Endothelial cell of umbilical vein (primary cell): ENCODE measurements at regions of chr13 and their contacts with region 1.

Region 1: DNA sequence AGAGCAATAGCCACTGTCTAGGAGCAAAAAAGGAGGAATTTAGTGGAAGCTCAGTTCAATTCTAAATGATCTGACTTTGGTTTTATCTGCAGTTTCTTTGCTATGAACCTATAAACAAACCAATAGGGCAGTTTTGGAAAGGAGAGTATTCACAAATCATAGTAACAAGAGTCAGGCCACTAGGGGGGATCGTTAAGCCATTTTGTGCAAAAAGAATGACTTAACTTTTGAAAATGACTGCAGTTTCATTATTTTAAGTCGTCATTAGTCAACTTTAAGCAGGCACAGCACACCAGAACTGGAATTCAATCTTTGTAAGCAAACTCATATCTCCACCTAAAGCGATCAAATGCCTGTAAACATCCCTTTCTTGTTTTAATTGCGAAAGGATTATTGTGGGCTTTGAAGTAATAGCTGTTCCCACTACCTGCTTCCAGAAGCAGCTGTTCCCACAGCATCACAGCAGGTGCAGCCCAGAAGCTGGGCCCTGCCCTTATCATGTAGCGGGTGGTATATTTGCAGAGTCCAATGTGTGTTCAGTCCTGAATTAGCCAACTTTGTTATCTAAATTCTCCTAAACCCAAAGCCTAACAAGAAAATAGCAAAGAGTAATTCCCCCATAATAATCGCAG is 51.5 kb downstream of the SOX21 start:
- DNase-seq: peak; percentile 36
- H3K4me3 ChIP-seq: no peak overlapping the region
- H3K27ac ChIP-seq: no peak overlapping the region
- H3K4me1 ChIP-seq: peaks cover 25% of the 10 kb centered on the region
- H3K27me3 ChIP-seq: peaks cover 0 to 3% of the 10 kb centered on the region in 2 experiments
- CTCF ChIP-seq: peak; percentile 19 to 36
- POLR2A ChIP-seq: no peak

Region 2: GRCh38 chr13:94033830-94034642 is 626.8 kb before region 1 on chr13:
- CTCF ChIA-PET with region 1: no interaction called
- POLR2A ChIA-PET with region 1: no interaction called
- dilution Hi-C with region 1: no loop called
- intact Hi-C with region 1: no loop called
- DNase-seq: no peak
- H3K4me3 ChIP-seq: no peak overlapping the region
- H3K27ac ChIP-seq: no peak overlapping the region
- H3K4me1 ChIP-seq: no peaks in the 10 kb centered on the region
- H3K27me3 ChIP-seq: no peaks in the 10 kb centered on the region
- CTCF ChIP-seq: no peak
- POLR2A ChIP-seq: no peak

Region 3: DNA sequence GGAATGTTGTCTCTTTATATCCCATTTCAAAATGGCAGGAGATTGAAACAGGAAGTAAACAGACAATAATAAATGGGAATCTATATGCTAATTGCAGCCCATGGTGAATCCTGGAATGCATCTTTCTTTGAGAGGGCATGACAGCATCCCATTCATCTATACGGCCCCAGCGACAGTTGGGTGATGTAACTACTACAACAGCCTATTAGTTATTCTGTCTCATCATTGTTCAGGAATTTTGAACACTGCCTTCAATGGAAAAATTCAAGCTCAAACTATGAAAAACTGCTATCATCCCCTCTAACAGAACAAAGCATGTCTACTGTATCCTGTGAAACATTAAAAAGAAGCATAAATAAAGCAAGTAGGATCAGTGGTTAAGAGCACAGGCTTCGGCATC is 443.4 kb before region 1 on chr13:
- CTCF ChIA-PET with region 1: no interaction called
- POLR2A ChIA-PET with region 1: no interaction called
- dilution Hi-C with region 1: no loop called
- intact Hi-C with region 1: no loop called
- DNase-seq: no peak
- H3K4me3 ChIP-seq: no peak overlapping the region
- H3K27ac ChIP-seq: no peak overlapping the region
- H3K4me1 ChIP-seq: no peaks in the 10 kb centered on the region
- H3K27me3 ChIP-seq: no peaks in the 10 kb centered on the region
- CTCF ChIP-seq: no peak
- POLR2A ChIP-seq: no peak

Region 4: GRCh38 chr13:94534166-94534565 is 126.6 kb before region 1 on chr13:
- CTCF ChIA-PET with region 1: no interaction called
- POLR2A ChIA-PET with region 1: no interaction called
- dilution Hi-C with region 1: no loop called
- intact Hi-C with region 1: no loop called
- DNase-seq: no peak
- H3K4me3 ChIP-seq: no peak overlapping the region
- H3K27ac ChIP-seq: no peak overlapping the region
- H3K4me1 ChIP-seq: no peaks in the 10 kb centered on the region
- H3K27me3 ChIP-seq: peaks cover 3 to 10% of the 10 kb centered on the region in 2 experiments
- CTCF ChIP-seq: no peak
- POLR2A ChIP-seq: no peak

Region 5: DNA sequence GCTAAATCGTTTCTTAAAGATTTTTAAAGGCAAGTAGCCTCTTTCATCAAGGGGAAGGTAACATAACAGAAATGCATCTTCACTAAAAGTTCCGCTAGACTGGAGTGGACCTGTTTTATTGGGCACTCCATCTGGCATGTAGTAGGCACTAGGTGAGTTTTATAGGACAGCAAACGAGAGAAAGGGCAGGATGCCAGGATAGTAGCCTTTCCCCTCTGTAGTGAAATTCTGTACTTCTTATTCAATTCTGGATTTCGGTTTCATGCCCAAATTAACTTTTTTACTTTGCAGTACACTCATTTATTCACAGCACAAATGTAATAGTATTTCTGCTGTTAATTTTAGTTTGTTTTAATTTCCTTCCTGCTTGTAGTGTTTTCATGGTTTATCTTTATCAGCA is 13.9 kb before region 1 on chr13:
- CTCF ChIA-PET with region 1: interaction called, 14 read pairs
- POLR2A ChIA-PET with region 1: no interaction called
- dilution Hi-C with region 1: no loop called
- intact Hi-C with region 1: no loop called
- DNase-seq: no peak
- H3K4me3 ChIP-seq: no peak overlapping the region
- H3K27ac ChIP-seq: no peak overlapping the region
- H3K4me1 ChIP-seq: peaks cover 4% of the 10 kb centered on the region
- H3K27me3 ChIP-seq: no peaks in the 10 kb centered on the region
- CTCF ChIP-seq: no peak
- POLR2A ChIP-seq: no peak

Region 6: DNA sequence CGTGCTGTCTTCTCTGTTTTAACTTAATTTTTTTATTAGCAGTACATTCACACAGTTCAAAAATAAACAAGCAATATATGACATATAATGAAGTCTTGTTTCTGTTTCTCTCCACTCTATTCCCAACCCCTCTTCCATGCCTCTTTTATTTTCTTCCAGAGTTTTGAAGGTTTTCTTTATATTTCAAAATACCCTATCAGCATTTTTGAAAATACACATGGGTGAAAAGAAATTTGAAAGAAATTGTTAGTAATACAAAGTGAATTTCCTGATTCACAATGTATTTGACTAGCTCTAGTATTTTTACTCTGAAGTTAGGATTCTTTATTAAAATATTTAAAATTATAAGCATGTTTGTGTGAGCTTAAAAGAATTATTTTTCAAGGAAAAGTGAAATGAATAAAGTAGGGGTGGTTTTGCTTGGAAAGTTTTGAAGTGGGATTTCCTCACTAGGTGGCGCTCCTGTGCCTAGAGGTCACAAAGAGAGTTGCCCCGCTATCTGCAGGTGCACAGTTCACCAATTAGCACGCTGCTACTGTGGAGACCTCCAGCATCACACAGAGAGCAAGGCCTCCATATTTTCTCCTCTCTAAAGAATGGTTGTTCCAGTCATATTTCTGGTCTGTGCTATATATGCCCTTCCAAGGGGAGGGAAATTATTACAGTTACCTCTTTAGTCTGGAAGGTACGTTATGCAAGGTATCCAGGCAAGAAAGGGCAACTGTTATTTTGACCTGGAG is 14.0 kb after region 1 on chr13:
- CTCF ChIA-PET with region 1: interaction called, 37 read pairs
- POLR2A ChIA-PET with region 1: no interaction called
- dilution Hi-C with region 1: no loop called
- intact Hi-C with region 1: no loop called
- DNase-seq: peak; percentile 49
- H3K4me3 ChIP-seq: no peak overlapping the region
- H3K27ac ChIP-seq: no peak overlapping the region
- H3K4me1 ChIP-seq: no peaks in the 10 kb centered on the region
- H3K27me3 ChIP-seq: peaks cover 6 to 26% of the 10 kb centered on the region in 2 experiments
- CTCF ChIP-seq: peak; percentile 60 to 78
- POLR2A ChIP-seq: no peak

Region 7: GRCh38 chr13:95207769-95208366 is 547.1 kb after region 1 on chr13:
- CTCF ChIA-PET with region 1: no interaction called
- POLR2A ChIA-PET with region 1: no interaction called
- dilution Hi-C with region 1: no loop called
- intact Hi-C with region 1: no loop called
- DNase-seq: no peak
- H3K4me3 ChIP-seq: no peak overlapping the region
- H3K27ac ChIP-seq: no peak overlapping the region
- H3K4me1 ChIP-seq: peaks cover 14% of the 10 kb centered on the region
- H3K27me3 ChIP-seq: no peaks in the 10 kb centered on the region
- CTCF ChIP-seq: no peak
- POLR2A ChIP-seq: no peak